ENCODE measurements at regions of chr17 and their contacts with region 1.

Region 1: DNA sequence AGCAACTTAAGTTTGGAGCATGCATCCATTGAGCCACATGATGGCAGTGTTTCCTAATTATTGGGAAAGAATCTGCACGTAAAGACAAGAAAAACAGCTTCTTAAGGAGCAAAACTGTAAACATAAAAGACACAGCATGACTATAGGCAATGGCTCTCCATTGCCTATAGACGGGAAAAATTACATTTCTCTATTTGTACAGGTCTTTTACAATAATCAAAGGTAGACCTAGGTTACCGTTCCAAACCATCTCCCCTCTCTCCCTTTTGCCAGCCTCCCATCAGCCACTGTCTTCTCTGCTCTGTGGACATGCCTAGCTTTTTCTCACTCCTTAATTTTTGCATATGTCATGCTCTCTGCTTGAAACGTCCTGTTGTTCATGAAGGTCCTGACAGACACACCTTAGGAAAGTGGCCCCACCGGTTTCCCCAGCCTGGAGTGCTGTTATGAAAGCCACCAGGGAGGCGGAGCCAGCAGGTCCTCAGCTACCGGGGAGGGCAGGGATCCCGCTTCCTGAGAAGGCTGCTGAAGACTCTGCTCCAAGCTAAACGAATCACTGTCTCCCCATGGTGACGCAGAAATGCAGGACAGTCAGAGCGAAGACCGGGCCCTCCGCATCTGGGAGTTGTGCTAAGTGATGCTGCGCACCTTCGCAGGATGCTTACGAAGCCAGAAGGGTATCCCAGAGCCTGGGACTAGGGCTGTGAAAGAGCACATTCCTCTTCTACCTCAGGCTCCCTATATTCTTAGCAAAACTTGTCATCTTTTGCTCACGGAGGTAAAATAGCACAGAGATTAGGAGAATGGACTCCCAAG is 2.2 kb upstream of the SLC16A11 start:
- DNase-seq: peak; percentile 96
- H3K4me3 ChIP-seq: peak overlapping the region; percentile 55
- H3K27ac ChIP-seq: peak overlapping the region; percentile 97
- H3K4me1 ChIP-seq: peaks cover 48% of the 10 kb centered on the region
- H3K27me3 ChIP-seq: no peaks in the 10 kb centered on the region
- CTCF ChIP-seq: peak; percentile 95

Region 2: DNA sequence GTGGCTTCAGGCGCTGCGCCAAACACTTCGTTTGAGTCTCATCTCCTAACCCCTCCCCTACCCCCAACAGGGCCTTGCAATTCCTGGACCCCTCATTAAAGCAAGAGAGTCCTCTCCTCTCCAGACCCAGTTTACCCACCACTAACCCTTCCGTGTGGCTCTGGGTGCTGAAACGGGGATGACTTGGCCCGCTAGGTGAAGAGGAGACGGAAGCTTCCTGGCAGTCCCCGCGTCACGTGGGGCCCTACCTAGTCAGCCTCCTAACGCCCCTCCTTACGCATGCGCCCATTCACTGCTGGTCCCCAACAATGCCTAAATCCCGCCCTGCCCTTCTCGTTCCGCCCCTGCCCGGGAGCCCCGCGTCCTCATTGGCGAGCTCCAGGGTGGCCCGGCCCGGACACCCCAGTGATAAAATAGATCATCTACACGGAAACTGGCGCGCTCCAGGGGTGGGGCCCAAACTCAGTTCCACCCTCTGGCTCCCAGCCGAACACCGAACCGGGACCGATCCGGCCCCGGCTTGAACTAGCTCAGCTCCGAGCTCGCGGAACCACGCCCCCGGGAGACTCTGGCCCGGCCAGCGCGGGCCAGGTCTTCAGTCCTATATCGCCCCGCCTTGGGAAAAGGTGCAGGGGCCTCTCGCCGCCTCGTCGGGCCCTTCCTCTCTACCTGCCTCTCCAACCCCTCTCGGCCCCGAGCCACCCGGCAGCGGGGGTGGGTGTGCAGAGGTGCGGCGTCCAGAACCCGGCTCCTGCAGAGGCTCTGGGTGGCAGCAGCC is 10.3 kb before region 1 on chr17 and contains the start of gene SLC16A13:
- CTCF ChIA-PET with region 1: interaction called, 10 read pairs
- POLR2A ChIA-PET with region 1: interaction called, 7 read pairs
- intact Hi-C with region 1: no loop called
- DNase-seq: peak; percentile 93 to 99
- H3K4me3 ChIP-seq: peak within 1 kb of the TSS; percentile 76
- H3K27ac ChIP-seq: peak within 1 kb of the TSS; percentile 71
- H3K4me1 ChIP-seq: peaks cover 20% of the 10 kb centered on the region
- H3K27me3 ChIP-seq: no peaks in the 10 kb centered on the region
- CTCF ChIP-seq: no peak
- total RNA-seq, gene SLC16A13: 33.4 and 40.6 TPM in 2 replicates

Region 3: DNA sequence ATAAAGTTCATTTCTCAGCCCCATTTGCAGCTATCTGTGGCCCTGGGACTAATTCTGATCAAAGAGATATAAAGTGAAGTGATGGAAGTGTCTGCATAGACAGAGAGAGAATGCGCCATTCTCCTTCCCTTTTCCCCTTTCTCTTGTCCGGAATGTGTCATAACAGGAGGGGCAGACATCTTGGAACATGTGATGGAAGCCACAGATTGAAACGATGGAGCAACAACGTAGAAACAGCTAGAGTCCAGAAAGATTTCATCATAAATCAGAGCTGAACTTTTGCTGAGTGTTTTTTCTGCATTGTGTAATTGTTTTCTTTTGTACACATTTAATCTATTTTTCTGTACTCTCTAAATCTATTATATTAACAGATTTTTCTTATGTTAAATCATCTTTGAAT is 121.7 kb after region 1 on chr17:
- CTCF ChIA-PET with region 1: interaction called, 12 read pairs
- POLR2A ChIA-PET with region 1: interaction called, 8 read pairs
- intact Hi-C with region 1: no loop called
- DNase-seq: no peak
- H3K4me3 ChIP-seq: no peak overlapping the region
- H3K27ac ChIP-seq: no peak overlapping the region
- H3K4me1 ChIP-seq: peaks cover 4% of the 10 kb centered on the region; the same call in 1 of the 2 replicates
- H3K27me3 ChIP-seq: no peaks in the 10 kb centered on the region
- CTCF ChIP-seq: no peak

Region 4: DNA sequence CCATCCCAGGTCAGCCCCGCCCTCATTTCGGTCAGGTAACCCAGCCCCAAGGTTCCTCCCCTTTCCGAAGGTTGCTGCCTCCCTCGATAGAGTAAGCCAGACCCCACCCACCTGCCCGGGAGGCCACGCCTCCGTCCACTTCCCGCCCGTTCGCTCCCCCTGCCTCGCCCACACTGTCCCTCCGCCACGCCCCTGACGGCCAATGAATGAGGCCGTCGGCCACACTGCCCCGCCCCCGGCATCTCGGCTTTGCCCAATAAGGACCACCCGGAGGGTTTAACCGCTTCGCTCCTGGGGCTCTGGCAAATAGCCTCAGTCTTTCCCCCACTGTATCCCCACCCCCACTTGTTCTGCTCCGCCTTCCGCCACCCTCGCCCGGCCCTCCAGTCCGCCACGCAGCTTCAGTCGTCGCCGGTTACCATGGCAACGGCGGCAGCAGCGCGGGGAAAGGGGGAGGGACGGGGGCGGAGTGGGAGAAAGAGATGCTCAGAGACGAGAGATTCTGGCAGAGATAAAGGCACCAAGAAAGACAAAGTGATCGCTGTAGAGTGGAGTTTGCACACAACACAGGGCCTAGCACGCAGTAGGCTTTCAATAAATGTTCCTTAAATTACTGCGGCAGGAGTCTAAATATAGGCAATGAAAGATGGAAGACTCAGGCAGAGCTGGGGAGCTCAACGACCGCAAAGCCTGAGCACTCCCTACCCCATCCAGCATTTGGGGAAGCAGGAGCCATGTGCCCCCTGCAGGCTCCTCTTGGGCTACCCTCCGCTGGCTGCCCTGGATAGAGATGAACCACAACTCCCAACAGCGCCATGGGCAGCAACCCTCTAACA is 168.4 kb after region 1 on chr17:
- CTCF ChIA-PET with region 1: interaction called, 4 read pairs
- POLR2A ChIA-PET with region 1: interaction called, 5 read pairs
- intact Hi-C with region 1: loop called (anchors 2 kb)
- DNase-seq: peak; percentile 90 to 100
- H3K4me3 ChIP-seq: peak overlapping the region; percentile 52
- H3K27ac ChIP-seq: no peak overlapping the region
- H3K4me1 ChIP-seq: peaks cover 20% of the 10 kb centered on the region
- H3K27me3 ChIP-seq: no peaks in the 10 kb centered on the region
- CTCF ChIP-seq: peak; percentile 68

Region 5: GRCh38 chr17:7306911-7307686 is 261.0 kb after region 1 on chr17 and contains the start of gene EIF5A:
- CTCF ChIA-PET with region 1: no interaction called
- POLR2A ChIA-PET with region 1: interaction called, 16 read pairs
- intact Hi-C with region 1: no loop called
- DNase-seq: peak; percentile 99
- H3K4me3 ChIP-seq: peak within 1 kb of the TSS; percentile 86
- H3K27ac ChIP-seq: peak within 1 kb of the TSS; percentile 96
- H3K4me1 ChIP-seq: peaks cover 26% of the 10 kb centered on the region
- H3K27me3 ChIP-seq: no peaks in the 10 kb centered on the region
- CTCF ChIP-seq: no peak
- total RNA-seq, gene EIF5A: 806 and 1,298 TPM in 2 replicates

Region 6: DNA sequence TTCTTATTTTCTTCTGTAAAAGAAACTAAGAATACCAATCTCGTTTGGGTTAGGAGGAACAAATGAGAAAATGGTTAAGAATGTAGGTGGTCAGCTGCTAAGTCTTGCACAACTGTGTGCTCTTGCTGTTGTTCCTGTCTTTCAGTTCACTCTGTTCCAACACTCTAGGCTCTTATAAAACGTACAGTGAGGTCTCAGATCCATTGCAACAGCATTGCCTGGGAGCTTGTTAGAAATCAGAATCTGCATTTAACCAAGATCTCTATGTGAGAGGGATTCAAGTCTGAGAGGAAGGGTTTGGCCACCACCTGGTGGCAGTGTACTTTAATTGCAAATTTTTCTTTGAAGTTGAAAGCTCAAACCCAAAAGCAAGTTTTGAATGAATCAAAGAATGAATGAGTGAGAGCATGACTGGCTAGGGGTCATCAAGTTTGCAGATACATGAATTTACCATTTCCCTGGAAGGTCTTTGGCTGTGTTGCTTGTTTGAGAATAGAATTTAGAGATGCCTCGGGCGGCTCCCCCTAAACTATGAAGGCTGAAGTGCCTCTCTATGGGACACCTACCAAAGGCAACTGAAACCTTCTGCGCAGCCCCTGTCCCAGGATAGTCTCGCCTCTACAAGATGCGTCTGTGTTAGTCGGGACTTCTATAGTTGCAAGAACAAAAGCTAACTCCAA is 995.3 kb after region 1 on chr17:
- CTCF ChIA-PET with region 1: no interaction called
- POLR2A ChIA-PET with region 1: no interaction called
- intact Hi-C with region 1: loop called (anchors 5 kb)
- DNase-seq: peak; percentile 43 to 51
- H3K4me3 ChIP-seq: no peak overlapping the region
- H3K27ac ChIP-seq: no peak overlapping the region
- H3K4me1 ChIP-seq: peaks cover 5% of the 10 kb centered on the region; the same call in 1 of the 2 replicates
- H3K27me3 ChIP-seq: no peaks in the 10 kb centered on the region
- CTCF ChIP-seq: peak; percentile 77